ENCODE measurements at regions of chrX and their contacts with region 1.

Region 1: DNA sequence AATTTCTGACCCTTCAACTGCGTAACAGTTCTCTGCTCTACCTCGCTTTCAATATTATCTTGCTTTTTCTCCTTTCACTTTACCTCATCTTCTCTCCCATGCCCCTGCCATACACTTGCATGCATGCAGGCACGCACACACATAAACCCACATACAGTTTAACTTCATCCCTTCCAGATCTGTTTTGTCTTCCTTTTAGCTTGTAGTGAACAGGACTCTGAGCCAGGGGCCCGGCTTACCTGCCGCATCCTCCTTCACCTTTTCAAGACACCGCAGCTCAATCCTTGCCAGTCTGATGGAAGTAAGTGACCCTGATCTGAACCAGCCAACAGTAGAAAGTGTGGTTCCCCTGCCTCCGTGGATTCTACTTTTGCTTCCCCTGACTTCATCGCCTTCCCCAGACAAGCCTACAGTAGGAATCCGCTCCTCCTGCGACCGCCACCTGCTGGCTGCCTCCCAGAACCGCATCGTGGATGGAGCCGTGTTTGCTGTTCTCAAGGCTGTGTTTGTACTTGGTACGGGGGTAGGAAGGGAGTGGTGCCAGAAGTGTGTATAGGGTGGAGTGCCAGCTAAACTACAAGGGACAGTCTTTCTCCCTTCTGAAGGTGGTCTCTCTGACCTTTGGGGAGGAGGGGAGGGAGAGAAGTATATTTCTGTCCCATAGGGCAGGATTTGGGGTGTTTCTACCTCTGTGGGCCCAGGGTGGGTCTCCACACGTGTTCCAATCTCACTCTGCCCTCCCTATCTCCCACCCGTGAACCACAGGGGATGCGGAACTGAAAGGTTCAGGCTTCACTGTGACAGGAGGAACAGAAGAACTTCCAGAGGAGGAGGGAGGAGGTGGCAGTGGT is 10.7 kb downstream of the MED12 start:
- DNase-seq: no peak
- ATAC-seq: peak; percentile 98
- H3K4me3 ChIP-seq: no peak overlapping the region
- H3K27ac ChIP-seq: no peak overlapping the region
- H3K4me1 ChIP-seq: no peaks in the 10 kb centered on the region
- H3K27me3 ChIP-seq: no peaks in the 10 kb centered on the region
- CTCF ChIP-seq: peak; percentile 84 to 88 (median 88)
- EP300 ChIP-seq: no peak
- POLR2A ChIP-seq: peak; percentile 6; the same call in 1 of the 2 replicates
- RAD21 ChIP-seq: peak; percentile 80

Region 2: DNA sequence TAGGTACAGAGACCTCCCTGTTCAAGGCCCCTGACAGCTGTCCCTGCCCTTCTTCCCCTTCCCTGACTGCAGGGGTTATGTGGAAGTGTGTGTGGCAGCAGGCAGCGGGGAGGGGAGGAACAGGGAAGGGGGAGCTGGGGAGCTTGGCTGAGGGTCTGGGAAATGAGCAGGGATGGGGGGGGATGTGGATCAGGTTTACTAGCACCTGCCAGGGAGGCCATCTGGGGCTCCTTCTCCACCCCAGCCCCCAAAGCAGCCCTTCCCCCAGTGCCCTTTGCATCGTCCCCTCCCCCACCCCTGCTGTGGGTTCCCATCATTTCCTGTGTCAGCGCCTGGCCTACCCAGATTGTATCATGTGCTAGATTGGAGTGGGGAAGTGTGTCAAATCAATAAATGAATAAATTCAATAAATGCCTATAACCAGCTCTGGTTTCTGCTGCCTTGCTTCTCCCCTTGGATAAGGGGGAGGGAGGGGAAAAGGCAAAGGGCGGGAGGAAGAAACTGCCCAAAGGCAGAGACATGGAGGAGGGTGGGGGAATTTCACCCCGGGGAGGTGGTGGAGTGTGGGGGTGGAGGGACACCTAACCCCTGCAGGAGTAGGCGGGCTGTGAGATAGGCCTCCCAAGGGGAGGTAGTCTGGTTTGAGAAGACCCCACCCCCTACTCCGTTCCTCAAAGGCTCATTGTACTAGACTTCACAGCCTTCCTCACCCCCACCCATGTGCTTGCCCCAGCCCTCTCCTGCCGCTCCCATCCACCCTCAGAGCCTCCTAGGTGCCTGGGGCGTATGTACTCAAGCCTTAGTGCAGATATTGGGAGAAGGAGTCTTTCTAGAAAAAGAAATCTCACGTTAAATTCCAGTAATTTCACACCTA is 25.8 kb before region 1 on chrX:
- CTCF ChIA-PET with region 1: interaction called, 82 read pairs
- POLR2A ChIA-PET with region 1: interaction called, 4 read pairs
- RAD21 ChIA-PET with region 1: interaction called, 19 read pairs
- SMC1A ChIA-PET with region 1: interaction called, 46 read pairs
- in situ Hi-C with region 1: no loop called
- intact Hi-C with region 1: loop called (anchors 1 kb)
- DNase-seq: no peak
- ATAC-seq: peak; percentile 76
- H3K4me3 ChIP-seq: peak overlapping the region; percentile 42
- H3K27ac ChIP-seq: peak overlapping the region; percentile 61
- H3K4me1 ChIP-seq: peaks cover 3% of the 10 kb centered on the region; the same call in 1 of the 2 replicates
- H3K27me3 ChIP-seq: no peaks in the 10 kb centered on the region
- CTCF ChIP-seq: no peak
- EP300 ChIP-seq: peak; percentile 26 to 43; a peak in 1 of 4 replicates
- POLR2A ChIP-seq: no peak; the same call in 1 of the 2 replicates
- RAD21 ChIP-seq: no peak

Region 3: GRCh38 chrX:71118032-71118984 is 10.8 kb before region 1 on chrX and contains the start of gene MED12:
- CTCF ChIA-PET with region 1: interaction called, 10 read pairs
- POLR2A ChIA-PET with region 1: interaction called, 4 read pairs
- RAD21 ChIA-PET with region 1: interaction called, 7 read pairs
- SMC1A ChIA-PET with region 1: interaction called, 4 read pairs
- in situ Hi-C with region 1: no loop called
- intact Hi-C with region 1: no loop called
- DNase-seq: peak; percentile 52
- ATAC-seq: peak; percentile 99
- H3K4me3 ChIP-seq: peak within 1 kb of the TSS; percentile 85
- H3K27ac ChIP-seq: peak within 1 kb of the TSS; percentile 81
- H3K4me1 ChIP-seq: peaks cover 2% of the 10 kb centered on the region; the same call in 1 of the 2 replicates
- H3K27me3 ChIP-seq: no peaks in the 10 kb centered on the region
- CTCF ChIP-seq: no peak
- EP300 ChIP-seq: no peak
- POLR2A ChIP-seq: peak; percentile 67
- RAD21 ChIP-seq: no peak
- polyA plus RNA-seq, gene MED12: 0.68 to 1.7 TPM

Measured in GM12878 (cell line).